Gastrocnemius medialis (tissue), 4 donors: ENCODE measurements at regions of chr1 and their contacts with region 1.

Region 1: GRCh38 chr1:58783993-58784757 is at the start of gene JUN:
- DNase-seq: peak; percentile 99 to 100
- ATAC-seq: peak; percentile 71 to 74
- H3K4me3 ChIP-seq: peak within 1 kb of the TSS; percentile 89 to 97 (median 94)
- H3K27ac ChIP-seq: peak within 1 kb of the TSS; percentile 91 to 100 (median 99)
- H3K4me1 ChIP-seq: peaks cover 14 to 25% of the 10 kb centered on the region in 2 donors
- H3K27me3 ChIP-seq: no peaks in the 10 kb centered on the region
- CTCF ChIP-seq: peak in 1 of 5 experiments; percentile 21
- POLR2A ChIP-seq: peak; percentile 99 to 100
- total RNA-seq, gene JUN: 41.2 to 104 (median 90.8) TPM

Region 2: GRCh38 chr1:58768971-58769808 is 15.0 kb before region 1 on chr1:
- in situ Hi-C with region 1: no loop called
- intact Hi-C with region 1: no loop called
- DNase-seq: peak; percentile 26 to 58
- ATAC-seq: peak; percentile 51 to 54
- H3K4me3 ChIP-seq: no peak overlapping the region
- H3K27ac ChIP-seq: no peak overlapping the region
- H3K4me1 ChIP-seq: peaks cover 12 to 16% of the 10 kb centered on the region in 2 donors
- H3K27me3 ChIP-seq: no peaks in the 10 kb centered on the region
- CTCF ChIP-seq: peak; percentile 65 to 92 (median 75)
- POLR2A ChIP-seq: no peak

Region 3: GRCh38 chr1:58903514-58904298 is 119.5 kb after region 1 on chr1:
- in situ Hi-C with region 1: loop called in 3 of 4 experiments (anchors 10 to 25 kb)
- intact Hi-C with region 1: loop called (anchors 1 kb)
- DNase-seq: peak; percentile 86 to 93
- ATAC-seq: peak; percentile 69 to 81
- H3K4me3 ChIP-seq: peak overlapping the region; percentile 53 to 82 (median 60)
- H3K27ac ChIP-seq: peak overlapping the region; percentile 94 to 100 (median 94)
- H3K4me1 ChIP-seq: peaks cover 52 to 54% of the 10 kb centered on the region in 2 donors
- H3K27me3 ChIP-seq: no peaks in the 10 kb centered on the region
- CTCF ChIP-seq: no peak
- POLR2A ChIP-seq: peak; percentile 82 to 91

Region 4: GRCh38 chr1:59057211-59057694 is 273.1 kb after region 1 on chr1:
- in situ Hi-C with region 1: loop called in 2 of 4 experiments (anchors 25 kb)
- intact Hi-C with region 1: loop called (anchors 5 kb)
- DNase-seq: peak; percentile 56 to 72
- ATAC-seq: peak; percentile 80 to 82
- H3K4me3 ChIP-seq: no peak overlapping the region
- H3K27ac ChIP-seq: peak overlapping the region; percentile 43 to 66 (median 58)
- H3K4me1 ChIP-seq: peaks cover 26 to 47% of the 10 kb centered on the region in 2 donors
- H3K27me3 ChIP-seq: no peaks in the 10 kb centered on the region
- CTCF ChIP-seq: no peak
- POLR2A ChIP-seq: no peak

Region 5: DNA sequence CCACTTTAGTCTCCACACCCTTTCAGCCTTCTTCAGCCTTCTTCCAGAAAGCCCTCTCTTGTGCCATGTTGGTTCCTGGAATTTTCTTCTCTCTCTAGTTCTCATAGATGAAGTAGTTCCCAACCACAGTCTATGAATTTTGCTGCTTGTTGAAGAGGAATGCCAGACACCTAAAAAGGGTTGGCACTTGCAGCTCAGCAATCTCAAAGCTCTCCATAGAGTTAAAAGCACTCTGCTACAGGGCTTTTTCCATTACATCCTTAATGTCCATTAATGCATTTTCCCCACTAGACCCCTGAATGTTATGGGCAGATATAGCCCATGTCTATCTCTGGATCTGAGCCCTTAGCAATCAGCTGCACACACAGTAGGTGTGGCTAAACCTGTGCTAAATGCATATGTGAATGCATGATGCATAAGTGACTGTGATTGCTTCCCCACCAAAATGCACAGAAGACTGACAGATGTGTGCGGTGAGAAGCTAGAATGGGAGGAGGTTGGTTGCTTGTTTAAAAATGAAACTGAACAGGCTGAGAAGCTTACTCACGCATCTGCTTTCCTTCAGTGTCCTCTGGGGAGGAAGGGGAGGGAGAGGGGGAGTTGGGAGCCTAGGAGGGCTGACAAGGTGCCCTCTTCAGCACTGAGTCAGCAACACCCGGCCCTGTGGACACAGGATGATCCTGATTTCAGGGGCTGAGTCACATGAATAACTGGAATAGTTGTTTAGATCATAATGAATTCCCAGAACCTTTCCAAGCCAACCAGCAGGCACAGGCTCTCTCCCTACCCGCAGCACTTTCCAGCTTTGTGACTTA is 366.6 kb after region 1 on chr1:
- in situ Hi-C with region 1: no loop called
- intact Hi-C with region 1: loop called (anchors 1 kb)
- DNase-seq: peak; percentile 87 to 94
- ATAC-seq: peak; percentile 85 to 86
- H3K4me3 ChIP-seq: peak overlapping the region; percentile 6 to 48 (median 36)
- H3K27ac ChIP-seq: peak overlapping the region; percentile 86 to 94 (median 87)
- H3K4me1 ChIP-seq: peaks cover 28 to 35% of the 10 kb centered on the region in 2 donors
- H3K27me3 ChIP-seq: no peaks in the 10 kb centered on the region
- CTCF ChIP-seq: no peak
- POLR2A ChIP-seq: no peak

Region 6: DNA sequence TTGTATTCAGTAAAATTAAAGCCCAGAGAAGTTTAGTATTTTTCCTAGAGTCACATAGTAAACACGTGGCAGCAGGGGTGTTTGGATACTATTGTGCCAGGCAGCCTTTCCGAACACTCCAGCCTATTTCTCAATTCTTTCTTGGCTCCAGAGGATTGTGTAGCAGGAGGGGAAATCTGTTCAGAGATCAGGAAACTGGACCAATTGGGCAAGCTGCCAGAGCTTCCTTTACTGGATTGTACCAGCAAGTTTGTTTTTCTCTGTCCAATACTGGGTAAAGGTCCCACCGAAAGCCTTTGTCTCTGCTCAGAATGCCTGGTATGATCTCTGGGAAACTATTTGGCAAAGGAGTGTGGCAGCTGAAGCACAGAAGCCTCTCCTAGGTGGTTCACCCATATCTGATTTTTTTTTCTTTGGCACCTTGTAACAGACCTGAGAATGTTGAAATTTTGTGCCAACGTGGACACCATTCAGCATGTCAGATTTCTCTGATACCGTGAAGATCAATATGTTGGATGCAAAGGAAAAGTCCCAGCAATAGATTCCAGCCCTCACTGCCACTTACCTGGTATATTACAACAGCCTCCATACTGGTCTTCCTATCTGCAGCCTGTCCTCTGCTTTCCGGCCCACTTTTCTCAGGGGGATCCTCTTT is 638.9 kb after region 1 on chr1:
- in situ Hi-C with region 1: no loop called
- intact Hi-C with region 1: loop called (anchors 10 kb)
- DNase-seq: peak; percentile 60 to 87
- ATAC-seq: peak; percentile 36 to 74
- H3K4me3 ChIP-seq: no peak overlapping the region
- H3K27ac ChIP-seq: peak overlapping the region; percentile 71 to 90 (median 88)
- H3K4me1 ChIP-seq: peaks cover 64 to 66% of the 10 kb centered on the region in 2 donors
- H3K27me3 ChIP-seq: no peaks in the 10 kb centered on the region
- CTCF ChIP-seq: no peak
- POLR2A ChIP-seq: no peak

Region 7: GRCh38 chr1:59596441-59596861 is 812.3 kb after region 1 on chr1:
- in situ Hi-C with region 1: no loop called
- intact Hi-C with region 1: loop called (anchors 5 kb)
- DNase-seq: peak in 1 of 2 donors; percentile 59
- ATAC-seq: peak; percentile 8 to 31
- H3K4me3 ChIP-seq: no peak overlapping the region
- H3K27ac ChIP-seq: peak overlapping the region; percentile 84 to 91 (median 86)
- H3K4me1 ChIP-seq: peaks cover 62 to 75% of the 10 kb centered on the region in 2 donors
- H3K27me3 ChIP-seq: no peaks in the 10 kb centered on the region
- CTCF ChIP-seq: no peak
- POLR2A ChIP-seq: no peak